A549 (cell line): ENCODE measurements at regions of chr20 and their contacts with region 1.

Region 1: DNA sequence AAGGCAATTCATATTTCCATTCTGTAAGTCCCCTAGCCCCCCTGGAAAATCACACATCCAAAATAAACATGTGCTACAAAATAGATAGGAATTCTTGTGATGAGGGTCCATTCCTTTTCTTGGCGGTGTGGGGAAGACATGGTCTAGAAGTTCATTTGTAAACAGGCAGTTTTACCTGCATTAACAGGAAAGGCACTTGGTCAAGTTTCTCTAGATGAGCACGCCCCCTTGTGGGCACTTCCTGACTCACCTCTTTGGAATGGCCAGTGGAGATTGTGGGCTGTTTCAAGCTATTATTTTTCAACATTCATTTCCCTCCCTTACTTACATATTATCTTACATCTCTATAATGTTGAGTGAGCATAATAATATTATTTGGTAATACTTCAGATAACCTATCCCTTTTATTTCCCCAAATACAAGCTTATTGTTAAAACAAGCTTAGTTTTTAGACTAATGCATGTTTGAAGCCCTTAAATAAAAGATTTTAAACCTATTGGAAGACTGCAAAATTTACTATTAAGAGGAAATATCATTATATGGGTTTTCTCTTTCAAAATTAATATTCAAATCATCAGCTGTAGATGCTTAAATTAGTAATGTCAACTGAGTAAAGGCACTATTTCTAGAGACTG is 92.1 kb downstream of the TASP1 start:
- DNase-seq: peak; percentile 51 to 83
- ATAC-seq: peak; percentile 80 to 94
- H3K4me3 ChIP-seq: no peak overlapping the region
- H3K27ac ChIP-seq: peak overlapping the region; percentile 34 to 63; a peak in 4 of 6 replicates
- H3K4me1 ChIP-seq: peaks cover 9% of the 10 kb centered on the region; the same call in 2 of the 3 replicates
- CTCF ChIP-seq: peak; percentile 98
- EP300 ChIP-seq: no peak
- POLR2A ChIP-seq: no peak
- RAD21 ChIP-seq: peak; percentile 97 to 98

Region 2: DNA sequence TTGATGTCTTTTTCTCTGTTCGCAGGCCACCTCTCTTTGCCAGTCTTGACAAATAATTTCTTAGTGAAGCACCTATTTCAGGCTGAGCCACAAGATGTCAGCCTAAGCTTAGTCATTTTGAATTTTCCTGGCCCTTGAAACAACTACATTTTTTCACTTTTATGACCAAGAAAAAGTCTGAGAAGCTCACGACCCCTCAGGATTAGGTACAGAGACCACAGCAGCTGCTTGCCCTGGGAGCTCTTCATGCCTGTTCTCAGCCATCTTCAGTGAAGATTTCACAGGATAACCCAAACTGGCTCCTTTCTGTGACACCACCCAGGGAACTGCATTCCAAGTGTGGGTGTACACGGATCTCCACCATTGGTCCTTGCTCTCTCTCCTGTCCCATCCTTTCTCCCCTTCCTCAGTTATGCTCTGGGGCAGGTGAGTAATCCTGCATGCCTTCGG is 576.2 kb before region 1 on chr20:
- CTCF ChIA-PET with region 1: interaction called, 22 read pairs
- POLR2A ChIA-PET with region 1: no interaction called
- DNase-seq: peak; percentile 20 to 63
- ATAC-seq: peak; percentile 69 to 80
- H3K4me3 ChIP-seq: no peak overlapping the region
- H3K27ac ChIP-seq: no peak overlapping the region
- H3K4me1 ChIP-seq: peaks cover 16% of the 10 kb centered on the region
- CTCF ChIP-seq: peak; percentile 94
- EP300 ChIP-seq: no peak
- POLR2A ChIP-seq: no peak
- RAD21 ChIP-seq: peak; percentile 95 to 97

Region 3: GRCh38 chr20:13125486-13125885 is 421.1 kb before region 1 on chr20:
- CTCF ChIA-PET with region 1: interaction called, 118 read pairs
- POLR2A ChIA-PET with region 1: no interaction called
- DNase-seq: no peak
- ATAC-seq: no peak
- H3K4me3 ChIP-seq: no peak overlapping the region
- H3K27ac ChIP-seq: no peak overlapping the region
- H3K4me1 ChIP-seq: no peaks in the 10 kb centered on the region
- CTCF ChIP-seq: no peak
- EP300 ChIP-seq: no peak
- POLR2A ChIP-seq: no peak
- RAD21 ChIP-seq: no peak

Region 4: GRCh38 chr20:13174402-13174801 is 372.2 kb before region 1 on chr20:
- CTCF ChIA-PET with region 1: no interaction called
- POLR2A ChIA-PET with region 1: no interaction called
- DNase-seq: no peak
- ATAC-seq: no peak
- H3K4me3 ChIP-seq: no peak overlapping the region
- H3K27ac ChIP-seq: no peak overlapping the region
- H3K4me1 ChIP-seq: no peaks in the 10 kb centered on the region
- CTCF ChIP-seq: no peak
- EP300 ChIP-seq: no peak
- POLR2A ChIP-seq: no peak
- RAD21 ChIP-seq: no peak

Region 5: DNA sequence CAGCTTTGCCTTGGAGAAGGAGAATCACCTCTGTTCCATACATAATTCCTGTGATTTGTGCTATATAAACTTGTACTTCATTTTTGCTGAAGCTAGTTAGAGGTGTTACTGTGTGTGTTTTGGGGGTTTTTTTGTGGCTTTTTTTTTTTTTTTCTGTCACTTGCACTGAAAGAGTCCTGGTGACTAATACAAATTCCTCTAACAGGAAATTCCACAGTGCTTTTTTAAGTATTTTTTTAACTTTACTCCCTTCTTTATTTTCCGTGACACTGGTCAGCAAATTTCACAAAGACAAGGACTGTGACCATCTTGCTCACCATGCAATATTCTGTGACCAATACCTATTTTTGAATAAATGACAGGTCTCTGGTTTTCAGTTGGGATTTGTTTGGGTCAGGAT is 215.1 kb before region 1 on chr20:
- CTCF ChIA-PET with region 1: interaction called, 42 read pairs
- POLR2A ChIA-PET with region 1: no interaction called
- DNase-seq: no peak
- ATAC-seq: no peak
- H3K4me3 ChIP-seq: no peak overlapping the region
- H3K27ac ChIP-seq: peak overlapping the region; percentile 15 to 57; a peak in 5 of 6 replicates
- H3K4me1 ChIP-seq: peaks cover 61% of the 10 kb centered on the region
- CTCF ChIP-seq: no peak
- EP300 ChIP-seq: no peak
- POLR2A ChIP-seq: no peak
- RAD21 ChIP-seq: no peak

Region 6: DNA sequence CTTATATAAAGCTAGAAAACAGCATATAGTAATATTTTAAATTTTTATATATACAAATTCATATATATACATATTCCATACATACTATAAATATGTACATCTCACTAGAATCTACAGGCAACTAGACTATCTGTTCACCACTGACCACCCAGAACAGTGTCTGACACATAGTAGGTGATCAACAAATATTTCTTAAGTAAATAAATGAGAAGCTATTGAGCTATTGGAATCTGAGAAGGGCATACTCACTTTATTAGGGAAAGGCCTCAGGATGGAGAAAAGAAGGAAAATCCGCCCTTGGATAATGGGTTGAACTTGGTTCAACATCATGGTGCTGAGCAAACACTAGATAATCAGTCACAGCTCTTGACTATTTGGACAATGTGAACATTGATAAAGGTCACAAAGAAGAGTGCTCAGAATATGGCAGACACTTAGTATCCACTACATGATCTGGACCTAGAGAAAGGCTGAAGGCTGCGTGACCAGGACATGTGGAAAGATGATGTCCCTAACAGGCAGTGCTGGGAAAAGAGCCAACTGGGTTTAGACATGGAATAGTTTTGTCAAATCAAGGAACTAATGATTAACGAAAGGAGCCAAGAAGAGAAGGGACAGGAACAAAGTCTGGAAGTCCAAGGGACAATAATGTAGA is 94.0 kb before region 1 on chr20:
- CTCF ChIA-PET with region 1: interaction called, 10 read pairs
- POLR2A ChIA-PET with region 1: no interaction called
- DNase-seq: no peak
- ATAC-seq: no peak
- H3K4me3 ChIP-seq: no peak overlapping the region
- H3K27ac ChIP-seq: no peak overlapping the region
- H3K4me1 ChIP-seq: peaks cover 29% of the 10 kb centered on the region
- CTCF ChIP-seq: no peak
- EP300 ChIP-seq: no peak
- POLR2A ChIP-seq: no peak
- RAD21 ChIP-seq: no peak

Region 7: GRCh38 chr20:13533946-13534345 is 12.7 kb before region 1 on chr20:
- CTCF ChIA-PET with region 1: interaction called, 41 read pairs
- POLR2A ChIA-PET with region 1: no interaction called
- DNase-seq: no peak
- ATAC-seq: no peak
- H3K4me3 ChIP-seq: no peak overlapping the region
- H3K27ac ChIP-seq: no peak overlapping the region
- H3K4me1 ChIP-seq: no peaks in the 10 kb centered on the region
- CTCF ChIP-seq: no peak
- EP300 ChIP-seq: no peak
- POLR2A ChIP-seq: no peak
- RAD21 ChIP-seq: no peak